HAP-1 (cell line): ENCODE measurements at regions of chr4 and their contacts with region 1.

Region 1: GRCh38 chr4:39458505-39459300 is at the starts of genes LIAS and RPL9:
- DNase-seq: peak; percentile 94 to 96
- H3K4me3 ChIP-seq: peak within 1 kb of the TSS; percentile 92
- H3K4me1 ChIP-seq: peaks cover 14% of the 10 kb centered on the region
- H3K27me3 ChIP-seq: no peaks in the 10 kb centered on the region

Region 2: GRCh38 chr4:38958453-38959190 is 500.1 kb before region 1 on chr4:
- in situ Hi-C with region 1: no loop called
- DNase-seq: no peak
- H3K4me3 ChIP-seq: no peak overlapping the region
- H3K4me1 ChIP-seq: peaks cover 21% of the 10 kb centered on the region
- H3K27me3 ChIP-seq: no peaks in the 10 kb centered on the region

Region 3: GRCh38 chr4:40309250-40309774 is 850.6 kb after region 1 on chr4:
- in situ Hi-C with region 1: loop called (anchors 25 kb)
- DNase-seq: peak; percentile 74 to 94
- H3K4me3 ChIP-seq: no peak overlapping the region
- H3K4me1 ChIP-seq: peaks cover 4% of the 10 kb centered on the region; the same call in 1 of the 2 replicates
- H3K27me3 ChIP-seq: no peaks in the 10 kb centered on the region